Activated CD4-positive, alpha-beta memory T cell treated with anti-CD3 and anti-CD28 coated beads, Interleukin-2, amount 10 ng/mL, durations not matched to agents 7 days and 5 days (primary cell): ENCODE measurements at regions of chr5 and their contacts with region 1.

Region 1: DNA sequence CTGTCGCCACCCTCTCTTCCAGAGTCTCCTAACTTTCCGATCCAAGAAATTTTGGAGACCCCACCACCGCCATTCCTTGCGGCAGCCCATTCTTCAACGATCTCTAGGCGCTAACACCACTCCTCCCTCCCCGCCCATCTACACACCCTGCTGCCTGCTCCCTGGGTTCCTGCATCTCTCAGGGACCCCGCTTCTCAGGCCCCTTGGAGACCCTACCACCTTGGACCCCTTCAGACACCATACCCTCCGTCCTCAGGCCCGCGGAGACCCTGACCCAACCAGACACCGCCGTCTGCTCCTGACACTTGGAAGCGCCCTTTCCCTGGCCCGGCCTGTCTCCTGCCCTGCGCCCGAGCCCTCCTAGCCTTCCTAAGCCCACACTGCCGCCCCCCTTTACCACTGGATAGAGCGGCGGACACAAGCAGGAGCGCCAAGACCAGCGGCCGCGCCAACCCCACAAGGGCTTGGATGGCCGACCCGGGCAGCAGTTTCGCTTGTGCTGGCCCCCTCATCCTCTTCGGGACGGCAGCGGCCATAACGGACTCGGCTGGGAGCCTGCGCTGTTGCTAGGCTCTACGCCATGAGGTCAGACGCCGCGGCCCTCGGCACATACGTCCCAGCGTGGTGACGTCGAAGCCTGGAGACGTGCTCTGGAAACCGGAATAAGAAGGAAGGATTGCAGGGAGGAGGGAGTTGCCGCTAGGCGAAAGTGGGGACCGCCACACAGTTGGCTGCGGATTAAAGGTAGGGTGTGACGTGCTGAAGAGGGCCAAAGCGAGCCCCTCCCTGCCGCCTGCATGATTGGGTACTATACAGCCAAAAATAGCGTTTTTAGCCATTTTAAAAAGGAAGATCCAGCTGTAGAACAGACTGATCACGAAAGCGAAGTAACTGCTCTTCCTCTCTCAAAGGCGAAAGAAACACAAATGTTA is at the start of gene C5orf15:
- DNase-seq: peak; percentile 95
- H3K4me3 Mint-ChIP-seq: peak within 1 kb of the TSS; percentile 96
- H3K27ac Mint-ChIP-seq: peak within 1 kb of the TSS; percentile 85
- H3K4me1 Mint-ChIP-seq: peaks cover 55% of the 10 kb centered on the region
- H3K27me3 Mint-ChIP-seq: no peaks in the 10 kb centered on the region
- total RNA-seq, gene C5orf15: 24.4 to 27.7 TPM

Region 2: GRCh38 chr5:133884569-133885311 is 83.6 kb before region 1 on chr5:
- CTCF ChIA-PET with region 1: no interaction called
- POLR2A ChIA-PET with region 1: no interaction called
- DNase-seq: no peak
- H3K4me3 Mint-ChIP-seq: no peak overlapping the region
- H3K27ac Mint-ChIP-seq: no peak overlapping the region
- H3K4me1 Mint-ChIP-seq: no peaks in the 10 kb centered on the region
- H3K27me3 Mint-ChIP-seq: no peaks in the 10 kb centered on the region

Region 3: DNA sequence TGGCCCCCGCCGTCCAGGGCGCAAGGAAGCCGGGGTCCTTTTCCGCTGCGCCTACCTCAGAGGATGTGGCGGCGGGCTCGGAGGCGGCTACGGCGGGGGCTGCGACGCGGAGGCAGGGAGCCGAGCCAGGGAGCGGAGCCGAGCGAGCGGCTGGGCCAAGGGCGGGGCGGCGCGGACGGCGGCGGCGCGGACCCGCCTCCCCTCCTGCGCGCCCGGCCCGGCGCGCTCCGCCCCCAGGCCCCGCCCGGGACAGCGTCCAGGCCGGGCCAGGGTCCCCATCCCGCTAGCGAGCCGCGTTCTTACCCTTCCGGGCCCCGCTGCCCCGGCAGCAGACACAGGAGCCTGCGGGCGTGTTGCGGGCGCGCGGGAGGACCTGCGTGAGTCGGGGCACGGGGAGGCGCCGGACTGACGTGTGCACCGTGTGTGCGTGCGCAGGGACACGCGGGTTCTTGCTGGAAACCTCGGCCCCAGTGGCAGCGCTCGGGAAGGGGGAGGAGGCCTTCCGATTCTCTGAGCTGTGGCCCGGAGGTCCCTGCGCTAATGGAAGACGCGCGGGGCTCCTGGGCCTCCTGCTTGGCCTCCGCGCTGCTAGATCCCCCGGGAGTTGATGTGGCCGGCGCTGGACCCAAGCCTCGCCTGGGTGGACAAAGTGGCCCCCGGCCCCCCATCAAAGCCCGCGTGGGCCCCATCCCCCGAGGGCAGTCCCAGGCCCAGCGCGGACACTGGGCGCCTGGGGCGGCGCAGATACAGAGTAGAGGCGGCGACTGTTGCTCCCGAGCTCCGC is 36.5 kb after region 1 on chr5 and contains the start of gene VDAC1:
- CTCF ChIA-PET with region 1: no interaction called
- POLR2A ChIA-PET with region 1: interaction called, 14 read pairs
- DNase-seq: peak; percentile 87
- H3K4me3 Mint-ChIP-seq: peak within 1 kb of the TSS; percentile 88
- H3K27ac Mint-ChIP-seq: peak within 1 kb of the TSS; percentile 90
- H3K4me1 Mint-ChIP-seq: peaks cover 43% of the 10 kb centered on the region
- H3K27me3 Mint-ChIP-seq: no peaks in the 10 kb centered on the region
- total RNA-seq, gene VDAC1: 216 to 218 TPM

Region 4: DNA sequence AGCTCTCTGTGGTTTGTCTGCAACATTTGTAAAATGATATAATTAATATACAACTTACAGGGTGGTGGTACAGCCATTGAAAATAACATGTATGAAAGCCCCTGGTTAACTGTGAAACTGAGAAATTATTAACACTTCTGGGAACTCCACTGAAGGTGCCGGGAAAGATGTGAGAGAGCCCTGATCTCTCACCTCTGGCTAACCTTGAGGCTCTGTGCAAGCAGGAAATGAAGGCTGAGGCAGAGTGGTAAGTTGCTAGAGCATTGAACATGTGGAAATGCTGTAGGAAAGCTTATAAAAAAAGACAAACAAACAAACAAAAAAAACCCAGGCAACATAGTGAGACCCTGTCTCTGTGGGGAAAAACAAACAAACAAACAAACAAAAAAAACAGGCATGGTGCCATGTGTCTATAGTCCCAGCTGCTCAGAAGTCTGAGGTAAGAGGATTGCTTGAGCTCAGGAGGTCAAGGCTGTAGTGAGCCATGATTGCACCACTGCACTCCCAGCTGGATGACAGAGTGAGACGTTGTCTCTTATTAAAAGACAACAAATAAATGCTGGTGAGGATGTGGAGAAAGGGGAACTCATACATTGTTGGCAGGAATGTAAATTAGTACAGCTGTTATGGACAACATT is 1006.9 kb after region 1 on chr5:
- CTCF ChIA-PET with region 1: no interaction called
- POLR2A ChIA-PET with region 1: no interaction called
- DNase-seq: no peak
- H3K4me3 Mint-ChIP-seq: no peak overlapping the region
- H3K27ac Mint-ChIP-seq: no peak overlapping the region
- H3K4me1 Mint-ChIP-seq: no peaks in the 10 kb centered on the region
- H3K27me3 Mint-ChIP-seq: no peaks in the 10 kb centered on the region